CD4-positive, alpha-beta T cell (primary cell): ENCODE measurements at regions of chr11 and their contacts with region 1.

Region 1: GRCh38 chr11:14308114-14308896 is 50.7 kb downstream of the RRAS2 start:
- DNase-seq: peak in 3 of 14 experiments; percentile 41 to 58 (median 54)
- ATAC-seq: peak; percentile 80
- H3K4me3 ChIP-seq: no peak overlapping the region
- H3K4me3 Mint-ChIP-seq: no peak overlapping the region
- H3K27ac ChIP-seq: no peak overlapping the region
- H3K27ac Mint-ChIP-seq: no peak overlapping the region
- H3K4me1 ChIP-seq: peaks cover under 1% of the 10 kb centered on the region
- H3K4me1 Mint-ChIP-seq: peaks cover 8% of the 10 kb centered on the region
- H3K27me3 ChIP-seq: no peaks in the 10 kb centered on the region
- H3K27me3 Mint-ChIP-seq: no peaks in the 10 kb centered on the region
- CTCF ChIP-seq: peak; percentile 61

Region 2: GRCh38 chr11:14253421-14253820 is 54.9 kb before region 1 on chr11:
- CTCF ChIA-PET with region 1: no interaction called
- POLR2A ChIA-PET with region 1: no interaction called
- intact Hi-C with region 1: no loop called
- DNase-seq: no peak
- ATAC-seq: no peak
- H3K4me3 ChIP-seq: no peak overlapping the region
- H3K4me3 Mint-ChIP-seq: no peak overlapping the region
- H3K27ac ChIP-seq: no peak overlapping the region
- H3K27ac Mint-ChIP-seq: no peak overlapping the region
- H3K4me1 ChIP-seq: peaks cover 9% of the 10 kb centered on the region
- H3K4me1 Mint-ChIP-seq: peaks cover 10% of the 10 kb centered on the region
- H3K27me3 ChIP-seq: no peaks in the 10 kb centered on the region
- H3K27me3 Mint-ChIP-seq: no peaks in the 10 kb centered on the region
- CTCF ChIP-seq: no peak

Region 3: DNA sequence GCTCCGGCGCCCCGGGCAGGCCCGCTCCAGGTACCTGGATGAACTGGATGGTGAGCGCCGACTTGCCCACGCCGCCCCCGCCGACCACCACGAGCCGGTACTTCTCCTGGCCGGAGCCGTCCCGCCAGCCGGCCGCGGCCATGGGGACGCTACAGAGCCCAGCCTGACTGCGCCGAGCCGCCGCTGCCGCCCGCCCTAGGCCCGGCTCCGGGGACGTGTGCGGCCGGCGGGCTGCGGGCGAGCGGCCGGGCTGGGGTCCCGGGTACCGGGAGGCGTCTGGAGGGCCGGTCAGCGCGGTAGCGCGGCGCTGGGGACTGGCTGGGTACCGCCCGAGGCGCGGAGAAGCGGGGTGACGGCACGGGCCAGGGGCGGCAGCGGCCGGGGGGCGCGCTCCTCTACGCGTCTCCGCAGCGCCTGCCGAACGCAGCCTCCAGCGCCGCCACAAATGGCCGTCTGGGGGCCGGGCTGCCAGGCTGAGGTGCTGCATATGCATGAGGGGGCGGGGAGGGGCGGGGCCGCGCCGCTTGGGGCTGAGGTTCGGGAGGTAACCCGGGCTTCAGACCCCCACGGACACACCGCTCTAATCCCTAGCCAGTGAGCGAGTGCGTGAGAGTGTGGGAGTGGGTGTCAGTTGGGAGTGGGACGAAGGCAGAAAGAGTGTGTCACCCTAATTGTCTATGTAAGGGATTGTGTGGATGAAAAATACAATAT is 50.6 kb after region 1 on chr11 and contains the start of gene RRAS2:
- CTCF ChIA-PET with region 1: no interaction called
- POLR2A ChIA-PET with region 1: no interaction called
- intact Hi-C with region 1: loop called in 1 of 2 experiments (anchors 5 kb)
- DNase-seq: peak; percentile 65 to 90 (median 74)
- ATAC-seq: peak; percentile 95
- H3K4me3 ChIP-seq: peak within 1 kb of the TSS; percentile 69
- H3K4me3 Mint-ChIP-seq: peak within 1 kb of the TSS; percentile 92
- H3K27ac ChIP-seq: no peak within 1 kb of the TSS
- H3K27ac Mint-ChIP-seq: peak within 1 kb of the TSS; percentile 75
- H3K4me1 ChIP-seq: peaks cover 13% of the 10 kb centered on the region
- H3K4me1 Mint-ChIP-seq: peaks cover 30% of the 10 kb centered on the region
- H3K27me3 ChIP-seq: no peaks in the 10 kb centered on the region
- H3K27me3 Mint-ChIP-seq: no peaks in the 10 kb centered on the region
- CTCF ChIP-seq: no peak
- total RNA-seq, gene RRAS2: 20.7 to 21.2 TPM

Region 4: DNA sequence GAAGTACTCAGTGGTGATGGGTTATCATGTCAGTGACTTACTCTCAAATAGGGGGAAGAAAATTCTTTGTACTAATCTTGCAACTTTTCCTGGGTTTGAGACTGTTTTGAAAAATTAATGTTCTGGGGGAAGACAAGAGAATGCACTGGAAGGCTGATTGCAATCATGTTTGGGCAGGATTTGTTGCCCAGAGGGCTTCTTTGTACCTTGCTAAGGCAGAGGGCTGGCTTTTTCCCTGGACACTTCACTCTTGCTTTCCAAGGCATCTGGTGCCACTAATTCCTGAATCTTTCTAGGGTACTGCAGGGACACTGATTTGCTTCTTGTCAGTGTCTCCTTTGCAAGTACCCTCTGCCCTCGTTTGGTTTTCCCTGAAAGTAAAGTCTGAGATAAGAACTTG is 90.0 kb after region 1 on chr11:
- CTCF ChIA-PET with region 1: no interaction called
- POLR2A ChIA-PET with region 1: no interaction called
- intact Hi-C with region 1: no loop called
- DNase-seq: no peak
- ATAC-seq: no peak
- H3K4me3 ChIP-seq: no peak overlapping the region
- H3K4me3 Mint-ChIP-seq: no peak overlapping the region
- H3K27ac ChIP-seq: no peak overlapping the region
- H3K27ac Mint-ChIP-seq: no peak overlapping the region
- H3K4me1 ChIP-seq: peaks cover 5% of the 10 kb centered on the region
- H3K4me1 Mint-ChIP-seq: peaks cover 4% of the 10 kb centered on the region
- H3K27me3 ChIP-seq: no peaks in the 10 kb centered on the region
- H3K27me3 Mint-ChIP-seq: no peaks in the 10 kb centered on the region
- CTCF ChIP-seq: no peak